Cardiac septum (tissue), 1 donor: ENCODE measurements at regions of chr3 and their contacts with region 1.

Region 1: GRCh38 chr3:46488735-46489361 is 8.9 kb upstream of the RTP3 start:
- DNase-seq: peak; percentile 94

Region 2: GRCh38 chr3:46558184-46559043 is 69.6 kb after region 1 on chr3:
- intact Hi-C with region 1: loop called (anchors 5 kb)
- DNase-seq: peak; percentile 89

Region 3: DNA sequence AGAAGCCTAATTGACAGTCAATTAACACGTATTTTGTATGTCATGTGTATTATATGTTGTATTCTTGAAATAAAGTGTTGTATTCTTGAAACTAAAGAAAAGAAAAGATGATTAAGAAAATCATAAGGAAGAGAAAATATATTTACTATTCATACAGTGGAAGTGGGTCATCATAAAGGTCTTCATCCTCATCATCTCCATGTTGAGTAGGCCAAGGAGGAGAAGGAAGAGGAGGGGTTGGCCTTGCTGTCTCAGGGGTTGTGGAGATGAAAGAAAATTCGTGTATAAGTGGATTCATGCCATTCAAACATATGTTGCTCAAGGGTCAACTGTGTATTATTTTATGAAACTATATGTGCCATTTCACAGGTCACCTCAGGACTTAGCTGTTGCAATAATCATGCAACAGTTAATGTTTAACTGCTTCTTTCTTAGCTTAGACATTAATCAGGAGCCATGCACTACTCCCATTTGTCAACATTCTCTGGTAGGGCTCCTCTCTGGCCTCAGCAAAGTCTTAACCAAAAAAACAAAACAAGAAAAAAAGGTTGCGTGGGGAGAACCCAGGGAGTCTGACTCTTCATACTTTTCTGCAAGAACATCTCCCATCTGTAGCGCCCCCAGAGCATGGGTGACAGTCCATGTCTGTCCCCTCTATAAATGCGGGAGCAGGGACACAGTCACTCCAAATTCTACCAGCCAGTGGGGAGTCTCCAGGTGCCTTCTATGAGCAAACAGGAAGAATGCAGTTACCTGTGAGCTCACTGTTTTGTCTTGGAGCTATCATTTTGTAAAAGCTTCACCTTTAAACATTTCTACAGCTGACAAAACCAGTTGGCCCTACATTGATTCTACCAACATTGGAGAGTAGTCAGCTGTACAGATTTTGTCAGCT is 97.2 kb after region 1 on chr3:
- intact Hi-C with region 1: no loop called
- DNase-seq: no peak